Activated CD4-positive, alpha-beta T cell treated with anti-CD3 and anti-CD28 coated beads, Interleukin-2, amount 10 ng/mL, durations not matched to agents 24 days and 14 days (primary cell): ENCODE measurements at regions of chr3 and their contacts with region 1.

Region 1: DNA sequence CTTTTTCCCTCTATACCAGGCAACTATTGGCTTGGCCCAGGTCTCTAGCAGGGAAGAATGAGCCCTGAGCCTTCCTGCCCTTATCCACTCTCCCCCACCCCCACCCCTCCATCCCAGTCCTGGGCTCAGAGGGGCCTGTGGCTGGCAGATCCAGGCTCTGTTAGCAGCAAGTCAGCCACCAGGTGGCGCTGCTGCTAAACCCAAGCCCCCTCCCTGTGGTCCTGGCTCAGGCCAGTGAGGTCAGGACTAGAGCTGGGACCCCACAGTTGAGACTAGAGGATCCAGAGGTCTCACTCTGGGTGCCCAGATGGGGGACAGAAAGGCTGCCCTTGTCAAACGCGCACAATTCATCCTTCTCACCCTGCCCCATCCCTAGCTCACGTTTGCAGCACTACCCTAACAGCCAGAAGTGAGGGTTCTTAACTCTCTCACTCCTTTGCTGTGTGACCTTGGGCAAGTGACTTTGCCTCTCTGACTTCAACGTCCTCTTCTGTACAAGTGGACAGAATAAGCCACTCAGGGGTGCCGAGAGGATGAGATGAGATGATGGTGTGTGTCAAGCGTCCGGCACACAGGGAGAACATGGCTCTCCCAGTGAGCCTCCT is 46.8 kb upstream of the SLC6A1 start:
- DNase-seq: peak; percentile 85
- H3K4me3 Mint-ChIP-seq: no peak overlapping the region
- H3K27ac Mint-ChIP-seq: no peak overlapping the region
- H3K4me1 Mint-ChIP-seq: no peaks in the 10 kb centered on the region
- H3K27me3 Mint-ChIP-seq: peaks cover 2% of the 10 kb centered on the region

Region 2: DNA sequence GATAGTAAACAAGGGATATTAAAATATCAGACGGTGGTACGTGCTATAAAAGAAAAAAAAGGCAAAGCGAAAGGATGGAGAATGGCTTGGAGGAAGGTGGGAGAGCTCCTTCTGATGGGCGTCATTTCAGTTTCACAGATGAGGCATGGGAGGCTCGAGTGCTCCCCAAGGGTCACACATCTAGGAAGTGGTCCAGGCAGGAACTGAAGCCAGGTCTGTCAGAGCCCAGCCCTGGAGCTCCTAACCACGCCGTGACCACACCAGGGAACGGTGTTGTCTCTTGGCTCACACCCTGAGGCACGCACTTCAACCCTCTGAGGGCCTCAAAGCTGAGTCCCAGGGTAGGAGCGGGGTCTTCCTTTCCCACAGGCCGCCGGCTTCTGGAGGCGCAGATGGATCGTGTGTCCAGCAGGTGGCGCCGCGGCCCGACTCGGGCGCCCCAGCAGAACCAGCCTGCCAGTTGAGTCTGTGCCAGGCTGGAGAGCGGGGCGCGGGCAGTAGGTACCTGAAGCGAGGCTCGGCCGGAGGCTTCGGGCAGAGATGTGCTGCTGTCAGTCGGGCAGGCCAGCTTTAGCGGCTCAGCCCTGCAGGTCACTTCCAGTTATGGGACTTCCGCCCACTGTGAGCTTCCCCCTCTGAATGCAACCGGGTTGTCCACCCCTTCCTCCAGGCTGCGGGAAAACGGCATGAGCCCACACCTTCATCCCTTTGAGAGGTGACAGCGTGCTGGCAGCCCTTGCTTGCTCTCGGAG is 114.9 kb after region 1 on chr3:
- intact Hi-C with region 1: loop called (anchors 1 kb)
- DNase-seq: peak; percentile 84
- H3K4me3 Mint-ChIP-seq: no peak overlapping the region
- H3K27ac Mint-ChIP-seq: no peak overlapping the region
- H3K4me1 Mint-ChIP-seq: no peaks in the 10 kb centered on the region
- H3K27me3 Mint-ChIP-seq: peaks cover 5% of the 10 kb centered on the region

Region 3: DNA sequence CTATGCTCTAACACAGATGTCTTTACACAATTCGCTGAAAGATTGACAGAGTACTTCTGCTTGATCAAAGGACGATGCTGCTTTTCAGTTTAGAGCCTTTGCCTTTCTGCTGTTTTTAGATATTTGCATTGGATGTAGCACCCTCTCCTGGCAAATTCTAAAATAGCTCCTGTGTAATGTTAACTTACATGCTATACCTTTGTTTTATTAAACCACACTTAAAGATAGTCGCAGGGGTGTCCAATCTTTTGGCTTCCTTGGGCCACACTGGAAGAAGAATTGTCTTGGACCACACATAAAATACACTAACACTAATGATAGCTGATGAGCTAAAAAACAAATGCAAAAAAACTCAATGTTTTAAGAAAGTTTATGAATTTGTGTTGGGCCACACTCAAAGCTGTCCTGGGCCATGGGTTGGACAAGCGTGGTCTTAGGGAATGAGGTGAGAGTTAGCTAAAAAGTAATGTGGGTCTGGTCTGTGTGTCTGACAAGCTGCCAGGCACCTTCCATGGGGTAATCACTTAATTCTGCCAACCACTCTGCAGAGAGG is 389.3 kb after region 1 on chr3:
- intact Hi-C with region 1: loop called (anchors 5 kb)
- DNase-seq: peak; percentile 80
- H3K4me3 Mint-ChIP-seq: no peak overlapping the region
- H3K27ac Mint-ChIP-seq: no peak overlapping the region
- H3K4me1 Mint-ChIP-seq: peaks cover 5% of the 10 kb centered on the region
- H3K27me3 Mint-ChIP-seq: no peaks in the 10 kb centered on the region

Region 4: DNA sequence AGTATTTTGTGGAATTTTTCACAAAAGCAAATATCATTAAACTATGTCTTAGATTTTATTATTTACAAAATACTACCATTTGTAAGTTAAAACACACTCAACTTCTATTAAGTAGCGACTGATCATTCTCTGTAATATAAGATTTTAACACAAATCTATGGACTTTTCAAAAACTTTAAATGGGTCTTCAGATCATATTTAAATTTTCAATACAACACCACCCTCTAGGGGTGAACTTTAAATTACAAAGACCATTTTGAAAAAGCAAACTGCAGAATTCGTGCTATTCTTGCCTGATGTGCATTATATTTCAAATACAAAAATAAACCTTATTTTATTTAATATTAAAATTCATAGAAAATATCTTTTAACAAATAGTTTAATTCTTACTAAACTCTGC is 706.1 kb after region 1 on chr3:
- intact Hi-C with region 1: loop called (anchors 5 kb)
- DNase-seq: no peak
- H3K4me3 Mint-ChIP-seq: no peak overlapping the region
- H3K27ac Mint-ChIP-seq: no peak overlapping the region
- H3K4me1 Mint-ChIP-seq: peaks cover 5% of the 10 kb centered on the region
- H3K27me3 Mint-ChIP-seq: peaks cover 28% of the 10 kb centered on the region